Vagina (tissue), 2 donors: ENCODE measurements at regions of chr18 and their contacts with region 1.

Region 1: DNA sequence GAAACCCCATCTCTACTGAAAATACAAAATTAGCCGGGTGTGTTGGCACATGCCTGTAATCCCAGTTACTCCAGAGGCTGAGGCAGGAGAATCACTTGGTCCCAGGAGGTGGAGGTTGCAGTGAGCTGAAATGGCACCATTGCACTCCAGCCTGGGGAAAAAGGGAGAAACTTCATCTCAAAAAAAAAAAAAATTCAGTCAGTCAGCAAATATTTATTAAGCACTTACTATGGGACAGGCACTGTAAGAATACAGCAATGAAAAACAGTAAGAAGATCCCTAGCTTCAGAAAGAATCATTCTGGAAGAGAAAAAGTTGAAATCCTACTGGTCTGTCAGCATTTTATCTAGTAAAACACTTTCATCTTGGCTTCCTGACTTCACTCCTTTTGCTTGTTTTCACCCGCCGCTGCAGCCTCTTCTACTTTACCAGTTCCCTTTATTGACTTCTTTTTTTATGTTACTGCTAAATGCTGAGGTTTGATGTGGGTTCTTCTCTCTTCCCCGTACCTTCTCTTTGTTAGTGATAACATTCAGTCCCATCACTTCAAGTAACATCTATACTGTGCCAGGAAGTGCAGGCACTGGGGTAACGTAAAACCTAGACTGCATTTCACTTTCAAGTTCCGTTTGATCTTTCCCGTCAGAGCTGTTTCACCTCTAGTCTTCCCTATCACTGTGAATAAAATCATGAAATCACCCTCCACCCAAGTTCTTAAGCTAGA is 10.8 kb upstream of the TAF4B start:
- DNase-seq: no peak
- H3K4me3 ChIP-seq: no peak overlapping the region
- H3K27ac ChIP-seq: no peak overlapping the region
- H3K4me1 ChIP-seq: no peaks in the 10 kb centered on the region
- H3K27me3 ChIP-seq: no peaks in the 10 kb centered on the region
- CTCF ChIP-seq: no peak
- POLR2A ChIP-seq: no peak

Region 2: DNA sequence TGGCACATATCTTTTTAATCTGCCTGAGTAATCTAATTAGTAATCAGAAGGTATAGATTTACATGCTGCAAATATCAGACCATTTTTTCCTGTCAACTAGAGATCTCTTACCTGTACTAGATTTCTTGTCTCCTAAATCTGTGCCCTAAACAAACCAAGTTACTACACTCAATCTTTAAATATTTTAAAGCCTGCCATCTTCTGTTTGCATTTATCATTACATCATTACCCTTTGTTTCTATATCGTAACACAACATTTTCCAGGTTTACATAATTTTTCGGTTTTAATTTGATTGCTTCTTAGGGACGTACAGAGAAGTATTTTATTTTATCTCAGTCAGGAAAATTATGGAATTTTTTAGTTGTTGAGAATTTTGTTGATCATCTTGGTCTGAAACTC is 56.1 kb before region 1 on chr18:
- intact Hi-C with region 1: no loop called
- DNase-seq: no peak
- H3K4me3 ChIP-seq: no peak overlapping the region
- H3K27ac ChIP-seq: no peak overlapping the region
- H3K4me1 ChIP-seq: no peaks in the 10 kb centered on the region
- H3K27me3 ChIP-seq: no peaks in the 10 kb centered on the region
- CTCF ChIP-seq: no peak
- POLR2A ChIP-seq: no peak

Region 3: DNA sequence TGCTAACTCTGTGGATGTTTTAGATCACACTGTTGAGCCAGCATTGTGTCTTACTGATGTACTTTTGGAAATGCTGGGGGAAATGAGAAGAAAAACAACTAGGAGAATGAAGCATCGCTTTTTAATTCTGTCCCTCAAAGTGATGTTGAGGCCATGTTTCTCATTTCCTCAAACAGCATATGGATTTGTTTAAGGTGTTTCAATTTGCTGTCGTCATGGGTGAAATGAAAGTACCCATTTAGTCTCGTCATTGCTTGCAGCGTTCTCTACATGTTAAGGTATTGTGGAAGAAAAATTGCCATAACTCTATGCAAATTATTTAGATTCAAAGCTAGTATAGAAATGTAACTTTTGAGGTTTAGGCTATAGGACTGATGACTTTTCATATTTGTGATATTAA is 181.6 kb after region 1 on chr18:
- intact Hi-C with region 1: no loop called
- DNase-seq: no peak
- H3K4me3 ChIP-seq: no peak overlapping the region
- H3K27ac ChIP-seq: no peak overlapping the region
- H3K4me1 ChIP-seq: no peaks in the 10 kb centered on the region
- H3K27me3 ChIP-seq: no peaks in the 10 kb centered on the region
- CTCF ChIP-seq: no peak
- POLR2A ChIP-seq: no peak

Region 4: GRCh38 chr18:28075501-28075900 is 1860.1 kb after region 1 on chr18:
- intact Hi-C with region 1: loop called (anchors 10 kb)
- DNase-seq: no peak
- H3K4me3 ChIP-seq: no peak overlapping the region
- H3K27ac ChIP-seq: no peak overlapping the region
- H3K4me1 ChIP-seq: no peaks in the 10 kb centered on the region
- H3K27me3 ChIP-seq: no peaks in the 10 kb centered on the region
- CTCF ChIP-seq: no peak
- POLR2A ChIP-seq: no peak